ENCODE measurements at regions of chr4 and their contacts with region 1.

Region 1: DNA sequence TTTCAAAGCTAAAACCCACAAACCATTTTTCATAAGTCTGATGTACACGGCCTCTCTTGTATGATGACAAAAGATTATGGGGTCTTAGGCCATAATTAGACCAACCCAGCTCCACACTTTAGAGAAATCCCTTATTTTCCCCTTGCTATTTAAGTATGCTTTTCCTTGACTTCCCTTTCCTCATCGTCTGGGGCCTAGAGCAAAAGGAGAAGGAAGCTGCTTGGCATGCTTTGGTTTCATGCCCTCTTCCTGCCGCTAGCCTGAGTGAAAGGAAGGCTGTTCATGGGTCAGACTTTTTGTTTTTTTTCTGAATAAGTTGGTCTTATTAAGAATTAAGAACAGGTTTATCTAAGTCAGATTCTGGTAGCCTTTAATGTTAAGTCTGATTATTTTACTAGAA is 10.6 kb upstream of the RASGEF1B start:
- DNase-seq: no peak
- H3K4me3 ChIP-seq: no peak overlapping the region
- H3K27ac ChIP-seq: no peak overlapping the region
- H3K4me1 ChIP-seq: no peaks in the 10 kb centered on the region
- H3K27me3 ChIP-seq: no peaks in the 10 kb centered on the region
- CTCF ChIP-seq: no peak
- POLR2A ChIP-seq: no peak

Region 2: GRCh38 chr4:80909938-80910337 is 572.4 kb before region 1 on chr4:
- intact Hi-C with region 1: loop called (anchors 5 kb)
- DNase-seq: no peak
- H3K4me3 ChIP-seq: no peak overlapping the region
- H3K27ac ChIP-seq: no peak overlapping the region
- H3K4me1 ChIP-seq: no peaks in the 10 kb centered on the region
- H3K27me3 ChIP-seq: no peaks in the 10 kb centered on the region
- CTCF ChIP-seq: no peak
- POLR2A ChIP-seq: no peak